PC-9 (cell line): ENCODE measurements at regions of chr22 and their contacts with region 1.

Region 1: DNA sequence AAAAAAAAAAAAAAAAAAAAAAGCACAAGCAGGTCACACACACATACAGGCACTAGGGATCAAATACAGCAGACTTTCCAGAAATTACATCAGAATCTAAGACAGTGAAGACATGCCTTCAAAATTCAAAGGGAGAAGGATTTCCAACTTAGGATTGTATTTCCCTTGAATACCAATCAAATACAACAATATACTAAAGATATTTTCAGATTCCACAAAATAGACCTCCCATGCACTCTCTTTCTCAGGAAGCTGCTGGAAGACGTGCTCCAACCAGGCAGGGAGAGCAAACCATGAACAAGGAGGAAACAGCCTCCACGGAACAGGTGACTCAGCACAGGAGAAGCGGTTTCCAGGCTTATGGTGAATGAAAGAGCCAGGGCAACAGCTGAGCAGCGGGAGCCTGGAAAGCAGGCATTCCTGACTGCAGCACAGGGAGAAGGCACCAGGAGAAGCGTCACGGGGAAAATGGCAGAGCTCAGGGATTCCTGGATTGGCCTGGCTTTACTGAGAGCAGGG is 32.0 kb downstream of the TMEM184B start:
- DNase-seq: peak; percentile 80 to 95
- H3K4me3 ChIP-seq: peak overlapping the region; percentile 1; the same call in 1 of the 2 replicates
- H3K27ac ChIP-seq: peak overlapping the region; percentile 97
- H3K4me1 ChIP-seq: peaks cover 66% of the 10 kb centered on the region
- H3K27me3 ChIP-seq: no peaks in the 10 kb centered on the region
- CTCF ChIP-seq: no peak

Region 2: GRCh38 chr22:37472418-37473006 is 768.3 kb before region 1 on chr22:
- CTCF ChIA-PET with region 1: no interaction called
- POLR2A ChIA-PET with region 1: no interaction called
- intact Hi-C with region 1: no loop called
- DNase-seq: peak in 1 of 2 experiments; percentile 56
- H3K4me3 ChIP-seq: no peak overlapping the region
- H3K27ac ChIP-seq: no peak overlapping the region
- H3K4me1 ChIP-seq: no peaks in the 10 kb centered on the region
- H3K27me3 ChIP-seq: no peaks in the 10 kb centered on the region
- CTCF ChIP-seq: peak; percentile 88

Region 3: DNA sequence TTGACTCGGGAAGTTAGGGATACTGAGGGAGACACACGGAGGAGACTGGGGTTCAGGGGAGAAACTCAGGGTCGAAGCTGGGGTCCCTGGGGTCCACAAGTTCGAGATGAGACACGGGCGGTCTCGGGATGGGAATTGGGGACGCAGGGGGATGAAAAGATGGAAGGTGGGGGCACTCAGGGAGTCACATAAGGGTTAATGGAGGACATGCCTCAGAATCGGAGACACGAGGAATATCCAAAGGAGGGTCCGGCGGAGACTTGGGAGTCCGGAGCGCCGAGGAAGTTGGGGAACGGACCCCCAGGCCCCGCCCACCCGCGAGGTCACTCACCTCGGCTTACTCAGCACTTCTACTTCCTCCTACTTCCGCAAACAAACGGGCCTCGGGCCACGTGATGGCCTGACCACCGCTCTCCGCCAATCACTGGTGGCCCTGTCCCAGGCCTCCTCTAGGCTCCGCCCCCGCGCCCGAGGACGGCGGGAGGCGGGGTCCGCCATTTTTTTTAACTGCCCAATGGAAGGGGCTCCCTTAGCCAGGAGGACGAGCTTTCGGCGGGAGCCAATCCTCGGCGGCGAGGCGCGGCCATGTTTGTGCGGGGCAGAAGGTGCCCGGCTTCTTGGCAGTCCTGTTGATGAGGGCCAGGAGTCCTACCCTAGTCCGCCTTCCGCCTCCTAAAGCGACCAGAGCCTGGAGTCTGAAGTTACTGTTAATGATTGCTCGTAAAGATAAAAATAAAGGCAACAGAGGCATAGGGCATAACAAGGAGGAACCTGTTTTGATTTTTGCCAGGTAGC is 59.1 kb before region 1 on chr22 and contains the start of gene PLA2G6:
- CTCF ChIA-PET with region 1: no interaction called
- POLR2A ChIA-PET with region 1: no interaction called
- intact Hi-C with region 1: loop called (anchors 2 kb)
- DNase-seq: peak; percentile 99 to 100
- H3K4me3 ChIP-seq: peak within 1 kb of the TSS; percentile 66
- H3K27ac ChIP-seq: peak within 1 kb of the TSS; percentile 98
- H3K4me1 ChIP-seq: peaks cover 78% of the 10 kb centered on the region
- H3K27me3 ChIP-seq: no peaks in the 10 kb centered on the region
- CTCF ChIP-seq: no peak
- total RNA-seq, gene PLA2G6: 39.8 and 45.6 TPM in 2 replicates

Region 4: DNA sequence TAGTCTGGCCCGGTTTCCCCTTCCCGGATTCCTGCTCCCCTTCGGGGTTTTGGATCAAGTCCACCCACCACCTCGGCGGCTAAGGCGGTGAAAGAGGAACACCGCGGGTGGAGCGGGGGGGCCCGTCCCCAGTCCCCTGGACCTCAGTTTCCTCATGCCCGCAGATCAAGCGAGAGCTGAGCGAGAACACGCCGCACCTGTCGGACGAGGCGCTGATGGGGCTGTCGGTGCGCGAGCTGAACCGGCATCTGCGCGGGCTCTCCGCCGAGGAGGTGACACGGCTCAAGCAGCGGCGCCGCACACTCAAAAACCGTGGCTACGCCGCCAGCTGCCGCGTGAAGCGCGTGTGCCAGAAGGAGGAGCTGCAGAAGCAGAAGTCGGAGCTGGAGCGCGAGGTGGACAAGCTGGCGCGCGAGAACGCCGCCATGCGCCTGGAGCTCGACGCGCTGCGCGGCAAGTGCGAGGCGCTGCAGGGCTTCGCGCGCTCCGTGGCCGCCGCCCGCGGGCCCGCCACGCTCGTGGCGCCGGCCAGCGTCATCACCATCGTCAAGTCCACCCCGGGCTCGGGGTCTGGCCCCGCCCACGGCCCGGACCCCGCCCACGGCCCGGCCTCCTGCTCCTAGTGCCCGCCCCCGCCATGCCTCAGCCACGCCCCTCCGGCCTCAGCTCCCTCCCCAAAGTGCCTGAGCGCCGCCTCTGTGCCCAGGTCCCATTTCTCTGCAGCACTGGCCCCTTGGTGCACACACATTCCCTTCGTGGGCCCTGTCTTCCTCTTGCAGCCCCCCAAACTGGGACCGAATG is 26.3 kb before region 1 on chr22:
- CTCF ChIA-PET with region 1: interaction called, 3 read pairs
- POLR2A ChIA-PET with region 1: interaction called, 3 read pairs
- intact Hi-C with region 1: loop called (anchors 1 kb)
- DNase-seq: no peak
- H3K4me3 ChIP-seq: no peak overlapping the region
- H3K27ac ChIP-seq: no peak overlapping the region
- H3K4me1 ChIP-seq: peaks cover 38% of the 10 kb centered on the region
- H3K27me3 ChIP-seq: no peaks in the 10 kb centered on the region
- CTCF ChIP-seq: no peak

Region 5: DNA sequence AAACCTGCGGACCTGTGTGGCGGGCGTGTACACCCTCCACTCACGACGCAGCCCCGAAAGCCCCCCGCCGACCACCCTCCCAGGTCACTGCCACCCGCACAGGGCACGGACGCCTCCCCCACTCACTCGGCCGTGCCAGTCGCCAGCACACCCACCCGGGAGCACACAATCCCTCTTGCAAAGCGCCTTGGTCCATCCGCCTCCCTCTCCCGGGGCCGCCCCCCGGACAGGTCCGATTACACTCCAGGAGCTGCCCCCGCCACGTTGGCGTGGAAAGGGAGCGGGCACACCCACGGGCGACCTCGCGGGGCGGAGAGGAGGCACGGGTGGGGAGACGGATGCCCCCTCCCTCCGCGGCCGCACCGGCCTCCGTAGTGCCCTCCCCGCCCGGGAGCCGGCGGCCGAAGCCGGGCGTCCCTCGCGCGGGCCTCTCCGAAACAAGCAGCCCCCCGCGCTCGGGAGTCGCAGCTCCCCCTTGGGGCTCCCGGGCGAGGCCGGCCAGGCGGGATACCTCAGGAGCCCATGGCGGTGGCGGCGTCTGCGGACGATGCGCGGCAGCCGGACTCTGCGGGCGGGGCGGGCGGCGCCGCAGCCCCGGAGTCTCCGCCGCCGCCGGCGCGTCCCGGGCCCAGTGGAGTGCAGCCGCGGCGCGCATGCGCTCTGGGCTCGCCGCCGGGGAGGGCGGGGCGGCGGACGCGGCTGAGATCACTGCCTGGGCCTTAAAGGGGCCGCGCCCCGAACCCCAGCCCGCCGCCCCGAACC is 31.8 kb after region 1 on chr22 and contains the start of gene TMEM184B:
- CTCF ChIA-PET with region 1: no interaction called
- POLR2A ChIA-PET with region 1: interaction called, 5 read pairs
- intact Hi-C with region 1: loop called (anchors 2 kb)
- DNase-seq: peak in 1 of 2 experiments; percentile 86
- H3K4me3 ChIP-seq: peak within 1 kb of the TSS; percentile 90
- H3K27ac ChIP-seq: peak within 1 kb of the TSS; percentile 62
- H3K4me1 ChIP-seq: peaks cover 41% of the 10 kb centered on the region
- H3K27me3 ChIP-seq: no peaks in the 10 kb centered on the region
- CTCF ChIP-seq: no peak
- total RNA-seq, gene TMEM184B: 185 and 192 TPM in 2 replicates

Region 6: GRCh38 chr22:38298312-38299000 is 57.7 kb after region 1 on chr22:
- CTCF ChIA-PET with region 1: no interaction called
- POLR2A ChIA-PET with region 1: interaction called, 9 read pairs
- intact Hi-C with region 1: loop called (anchors 1 kb)
- DNase-seq: peak; percentile 97 to 100
- H3K4me3 ChIP-seq: peak overlapping the region; percentile 27; the same call in 1 of the 2 replicates
- H3K27ac ChIP-seq: peak overlapping the region; percentile 97
- H3K4me1 ChIP-seq: peaks cover 77% of the 10 kb centered on the region
- H3K27me3 ChIP-seq: no peaks in the 10 kb centered on the region
- CTCF ChIP-seq: peak; percentile 92